H1 (cell line): ENCODE measurements at regions of chr10 and their contacts with region 1.

Region 1: GRCh38 chr10:63145782-63146181 is 12.7 kb downstream of the NRBF2 start:
- DNase-seq: no peak
- H3K4me3 ChIP-seq: no peak overlapping the region
- H3K27ac ChIP-seq: no peak overlapping the region
- H3K4me1 ChIP-seq: no peaks in the 10 kb centered on the region; a peak in 1 of 7 replicates
- H3K27me3 ChIP-seq: no peaks in the 10 kb centered on the region
- CTCF ChIP-seq: no peak
- EP300 ChIP-seq: no peak
- POLR2A ChIP-seq: no peak
- RAD21 ChIP-seq: no peak

Region 2: GRCh38 chr10:63114031-63114814 is 31.6 kb before region 1 on chr10:
- CTCF ChIA-PET with region 1: no interaction called
- POLR2A ChIA-PET with region 1: no interaction called
- DNase-seq: no peak
- H3K4me3 ChIP-seq: no peak overlapping the region
- H3K27ac ChIP-seq: no peak overlapping the region
- H3K4me1 ChIP-seq: no peaks in the 10 kb centered on the region; a peak in 1 of 7 replicates
- H3K27me3 ChIP-seq: no peaks in the 10 kb centered on the region
- CTCF ChIP-seq: no peak
- EP300 ChIP-seq: no peak
- POLR2A ChIP-seq: no peak
- RAD21 ChIP-seq: no peak

Region 3: DNA sequence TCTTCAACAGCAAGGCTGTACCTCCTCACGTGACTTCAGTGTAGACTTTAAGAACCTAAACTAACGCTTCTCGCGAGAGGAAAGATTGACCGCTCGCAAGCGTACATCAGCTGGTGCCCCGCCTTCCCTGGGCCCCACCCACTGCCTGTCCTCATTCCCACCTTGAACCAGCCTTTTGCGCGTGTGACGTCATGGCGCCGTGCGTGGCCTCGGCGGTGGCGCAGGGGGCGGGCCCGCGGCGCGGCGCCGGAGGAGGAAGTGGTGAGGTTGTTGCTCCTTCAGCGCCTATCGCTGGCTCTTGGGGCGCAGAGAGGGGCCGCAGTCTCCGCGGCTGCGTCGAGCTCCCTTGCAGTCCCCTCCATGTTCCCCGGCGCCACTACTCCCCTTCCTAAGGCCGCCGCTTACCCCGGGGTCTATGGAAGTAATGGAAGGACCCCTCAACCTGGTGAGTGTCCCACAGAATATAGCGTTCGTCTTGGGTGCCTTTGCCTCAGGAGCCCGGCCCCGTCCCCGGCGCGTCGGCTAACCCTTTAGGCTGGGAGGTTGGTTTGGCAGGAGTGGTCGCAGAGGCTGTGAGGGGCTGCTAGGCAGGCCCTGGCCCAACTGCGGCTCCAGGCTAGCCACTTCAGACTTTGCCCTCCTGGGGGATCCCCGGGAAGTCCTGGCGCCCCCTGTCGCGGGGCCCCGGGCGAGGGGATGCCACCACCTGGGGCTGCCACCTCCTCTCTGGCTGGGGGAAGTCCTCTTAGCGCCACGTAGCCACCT is 12.5 kb before region 1 on chr10 and contains the start of gene NRBF2:
- CTCF ChIA-PET with region 1: interaction called, 4 read pairs
- POLR2A ChIA-PET with region 1: interaction called, 19 read pairs
- DNase-seq: peak; percentile 94 to 97
- H3K4me3 ChIP-seq: peak within 1 kb of the TSS; percentile 68 to 92 (median 76)
- H3K27ac ChIP-seq: peak within 1 kb of the TSS; percentile 64; the same call in 1 of the 2 replicates
- H3K4me1 ChIP-seq: no peaks in the 10 kb centered on the region; a peak in 1 of 7 replicates
- H3K27me3 ChIP-seq: no peaks in the 10 kb centered on the region
- CTCF ChIP-seq: no peak
- EP300 ChIP-seq: peak in 1 of 2 experiments; percentile 58; a peak in 1 of 3 replicates
- POLR2A ChIP-seq: peak; percentile 83 to 98
- RAD21 ChIP-seq: no peak
- total RNA-seq, gene NRBF2: 29.9 and 30.0 TPM in 2 replicates